ENCODE measurements at regions of chr5 and their contacts with region 1.

Region 1: DNA sequence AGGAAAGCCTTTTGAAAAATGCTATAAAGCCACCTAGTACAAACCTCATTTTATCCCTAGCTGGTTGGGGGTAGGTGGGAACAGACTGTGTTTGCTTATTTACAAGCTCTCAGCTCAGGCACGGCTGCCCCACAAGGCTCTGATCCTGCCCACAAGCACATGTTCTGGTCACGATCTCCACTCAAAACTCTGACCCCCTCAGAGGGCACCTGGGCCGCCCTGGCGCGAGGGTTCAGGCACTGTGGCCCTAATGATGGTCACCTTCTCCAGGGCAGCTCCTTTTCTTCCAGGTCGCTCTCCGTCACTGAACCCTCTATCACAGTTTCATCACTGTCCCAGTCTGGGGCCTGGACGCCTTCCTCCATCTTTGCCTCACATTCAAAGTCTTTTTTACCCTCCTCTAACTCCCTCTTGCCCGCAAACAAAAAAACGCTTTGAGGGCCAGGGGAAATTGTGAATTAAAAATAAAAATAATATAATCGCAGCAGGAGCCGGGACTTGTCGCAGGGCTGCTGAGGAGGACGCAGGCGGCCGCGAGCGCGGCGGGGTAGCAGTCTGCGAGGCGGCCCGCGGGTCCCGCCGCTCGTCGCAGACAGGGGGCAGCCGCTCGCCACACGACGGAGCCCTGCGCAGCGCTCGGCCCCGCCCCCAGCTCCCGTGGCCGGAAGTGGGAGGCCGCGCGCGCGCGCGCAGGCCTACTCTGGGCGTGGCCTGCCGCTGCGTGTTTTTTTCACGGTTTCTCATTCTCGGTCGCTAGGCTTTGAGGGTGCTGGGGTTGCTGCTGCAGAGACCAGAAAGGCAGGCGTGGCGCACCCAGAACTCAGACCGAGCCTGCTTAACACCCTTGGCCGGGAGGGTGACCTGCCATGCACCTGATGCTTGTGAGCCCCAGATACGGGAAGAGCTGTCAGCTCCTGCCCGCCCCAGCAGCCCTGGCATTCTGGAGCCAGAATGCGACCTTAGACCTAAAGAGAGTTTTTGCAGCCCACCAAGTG is at the start of gene ANKRD31:
- DNase-seq: peak in 1 of 2 experiments; percentile 86
- H3K4me3 ChIP-seq: peak within 1 kb of the TSS; percentile 65 to 82 (median 74)
- H3K27ac ChIP-seq: 0 out of 2 replicates have a peak within 1 kb of the TSS, but pooled peaks have one; percentile 57
- H3K4me1 ChIP-seq: peaks cover 5 to 12% (median 9%) of the 10 kb centered on the region in 4 experiments
- H3K27me3 ChIP-seq: no peaks in the 10 kb centered on the region
- CTCF ChIP-seq: peak; percentile 71 to 86 (median 84)
- EP300 ChIP-seq: 0 out of 3 replicates have a peak, but pooled peaks of 1 of the 2 experiments have one; percentile 18
- POLR2A ChIP-seq: peak in 1 of 2 experiments; percentile 53; a peak in 1 of 3 replicates
- RAD21 ChIP-seq: peak; percentile 59 to 84
- total RNA-seq, gene ANKRD31: 0.06 and 0.27 TPM in 2 replicates

Region 2: DNA sequence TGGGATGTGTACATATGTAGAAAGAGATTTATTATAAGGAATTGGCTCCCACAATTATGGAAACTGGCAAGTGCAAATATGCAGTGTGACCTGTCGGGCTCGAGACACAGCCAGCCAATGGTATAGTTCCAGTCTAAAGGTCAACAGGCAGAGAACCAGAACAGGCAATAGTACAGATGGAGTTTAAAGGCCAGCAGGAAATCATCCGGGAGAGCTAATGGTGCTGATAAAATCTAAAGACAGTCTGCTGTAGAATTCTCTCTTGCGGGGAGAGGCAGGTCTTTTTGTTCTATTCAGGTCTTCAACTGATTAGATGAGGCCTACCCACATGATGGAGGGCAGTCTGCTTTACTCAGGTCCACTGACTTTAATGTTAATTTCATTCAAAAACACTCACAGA is 21.7 kb before region 1 on chr5:
- CTCF ChIA-PET with region 1: no interaction called
- POLR2A ChIA-PET with region 1: no interaction called
- DNase-seq: no peak
- H3K4me3 ChIP-seq: no peak overlapping the region
- H3K27ac ChIP-seq: no peak overlapping the region
- H3K4me1 ChIP-seq: no peaks in the 10 kb centered on the region
- H3K27me3 ChIP-seq: no peaks in the 10 kb centered on the region
- CTCF ChIP-seq: no peak
- EP300 ChIP-seq: no peak
- POLR2A ChIP-seq: no peak
- RAD21 ChIP-seq: no peak

Region 3: GRCh38 chr5:75265731-75266130 is 29.1 kb after region 1 on chr5:
- CTCF ChIA-PET with region 1: interaction called, 19 read pairs
- POLR2A ChIA-PET with region 1: no interaction called
- DNase-seq: no peak
- H3K4me3 ChIP-seq: no peak overlapping the region
- H3K27ac ChIP-seq: no peak overlapping the region
- H3K4me1 ChIP-seq: no peaks in the 10 kb centered on the region
- H3K27me3 ChIP-seq: no peaks in the 10 kb centered on the region
- CTCF ChIP-seq: peak in 2 of 3 experiments; percentile 45 to 51; a peak in 2 of 4 replicates
- EP300 ChIP-seq: no peak
- POLR2A ChIP-seq: no peak
- RAD21 ChIP-seq: peak; percentile 84

Region 4: GRCh38 chr5:75336625-75337339 is 100.2 kb after region 1 on chr5 and contains the start of gene HMGCR:
- CTCF ChIA-PET with region 1: interaction called, 11 read pairs
- POLR2A ChIA-PET with region 1: interaction called, 14 read pairs
- DNase-seq: peak; percentile 93 to 99
- H3K4me3 ChIP-seq: peak within 1 kb of the TSS; percentile 84 to 96 (median 90)
- H3K27ac ChIP-seq: peak within 1 kb of the TSS; percentile 78
- H3K4me1 ChIP-seq: peaks cover 0 to 3% (median 2%) of the 10 kb centered on the region in 4 experiments; a peak in 3 of 7 replicates
- H3K27me3 ChIP-seq: no peaks in the 10 kb centered on the region
- CTCF ChIP-seq: peak; percentile 56 to 69 (median 67)
- EP300 ChIP-seq: no peak
- POLR2A ChIP-seq: peak; percentile 92 to 93
- RAD21 ChIP-seq: peak; percentile 70 to 71
- total RNA-seq, gene HMGCR: 199 and 217 TPM in 2 replicates

Region 5: GRCh38 chr5:75373862-75374261 is 137.2 kb after region 1 on chr5:
- CTCF ChIA-PET with region 1: no interaction called
- POLR2A ChIA-PET with region 1: no interaction called
- DNase-seq: no peak
- H3K4me3 ChIP-seq: no peak overlapping the region
- H3K27ac ChIP-seq: no peak overlapping the region
- H3K4me1 ChIP-seq: peaks cover 0 to 3% (median 1%) of the 10 kb centered on the region in 4 experiments; a peak in 2 of 7 replicates
- H3K27me3 ChIP-seq: no peaks in the 10 kb centered on the region
- CTCF ChIP-seq: no peak
- EP300 ChIP-seq: no peak
- POLR2A ChIP-seq: no peak
- RAD21 ChIP-seq: no peak